ENCODE measurements at regions of chr6 and their contacts with region 1.

Region 1: DNA sequence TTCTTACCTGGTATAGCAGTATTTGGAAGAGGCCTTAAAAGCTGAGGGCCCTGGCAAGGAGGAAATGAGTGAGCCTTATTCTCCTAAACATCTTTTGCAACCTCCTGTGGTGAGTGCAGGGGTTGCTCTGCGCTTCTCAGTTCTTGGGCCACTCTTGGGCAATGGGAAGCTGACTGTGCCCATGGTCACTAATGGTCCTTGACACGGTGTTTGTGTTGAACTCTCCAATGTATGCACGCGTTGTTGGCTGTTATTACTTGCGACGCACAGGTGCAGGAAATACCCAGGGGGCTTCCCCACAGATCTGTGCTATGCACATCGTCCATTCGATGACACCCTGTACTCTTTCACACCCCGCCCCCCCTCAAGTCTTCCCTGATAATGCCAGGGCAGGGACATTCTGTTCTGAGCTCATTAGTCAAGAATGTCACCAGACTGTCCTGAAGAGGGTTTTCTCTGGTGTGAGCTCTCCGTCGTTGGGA is 79.7 kb downstream of the EDN1 start:
- DNase-seq: peak; percentile 56
- CTCF ChIP-seq: no peak

Region 2: DNA sequence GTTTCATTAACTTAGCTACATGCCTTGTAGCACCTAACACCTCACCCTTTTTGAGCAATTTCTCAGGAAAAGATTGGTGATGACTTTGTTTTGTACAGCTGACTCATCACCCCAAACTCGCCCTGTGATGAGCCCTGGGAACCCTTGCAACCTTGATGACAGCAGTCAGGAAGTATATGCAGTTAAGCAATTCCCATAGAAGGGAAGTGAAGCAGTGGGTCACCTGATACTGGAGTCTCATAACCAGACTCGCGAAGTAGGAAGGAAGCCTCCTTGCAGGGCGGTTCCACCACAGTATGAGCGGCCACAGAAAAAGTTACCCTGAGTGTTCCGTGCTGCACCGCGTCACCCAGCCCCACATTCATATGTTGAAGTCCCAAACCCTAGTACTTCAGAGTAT is 161.6 kb before region 1 on chr6:
- CTCF ChIA-PET with region 1: no interaction called
- POLR2A ChIA-PET with region 1: no interaction called
- DNase-seq: no peak
- CTCF ChIP-seq: no peak

Region 3: GRCh38 chr6:12356983-12357972 is 12.5 kb before region 1 on chr6:
- CTCF ChIA-PET with region 1: interaction called, 12 read pairs
- POLR2A ChIA-PET with region 1: no interaction called
- DNase-seq: peak; percentile 62
- CTCF ChIP-seq: peak; percentile 21